CD4-positive, alpha-beta memory T cell (primary cell): ENCODE measurements at regions of chr9 and their contacts with region 1.

Region 1: GRCh38 chr9:4315582-4316215 is 15.8 kb upstream of the GLIS3 start:
- DNase-seq: peak; percentile 54 to 57 (median 56)
- H3K4me3 ChIP-seq: no peak overlapping the region
- H3K4me3 Mint-ChIP-seq: no peak overlapping the region
- H3K27ac ChIP-seq: no peak overlapping the region
- H3K27ac Mint-ChIP-seq: no peak overlapping the region
- H3K4me1 ChIP-seq: no peaks in the 10 kb centered on the region
- H3K4me1 Mint-ChIP-seq: no peaks in the 10 kb centered on the region
- H3K27me3 ChIP-seq: no peaks in the 10 kb centered on the region
- H3K27me3 Mint-ChIP-seq: peaks cover 3 to 6% of the 10 kb centered on the region in 2 donors

Region 2: GRCh38 chr9:4297151-4297785 is 18.4 kb before region 1 on chr9:
- CTCF ChIA-PET with region 1: interaction called, 3 read pairs
- POLR2A ChIA-PET with region 1: no interaction called
- intact Hi-C with region 1: loop called (anchors 1 kb)
- DNase-seq: peak in 4 of 5 donors; percentile 11 to 52 (median 22)
- H3K4me3 ChIP-seq: peak overlapping the region; percentile 34 to 72
- H3K4me3 Mint-ChIP-seq: peak overlapping the region; percentile 93 to 99 (median 95)
- H3K27ac ChIP-seq: no peak overlapping the region
- H3K27ac Mint-ChIP-seq: peak overlapping the region; percentile 48 to 90 (median 61)
- H3K4me1 ChIP-seq: peaks cover 16% of the 10 kb centered on the region
- H3K4me1 Mint-ChIP-seq: peaks cover 4 to 32% (median 19%) of the 10 kb centered on the region in 4 donors
- H3K27me3 ChIP-seq: no peaks in the 10 kb centered on the region
- H3K27me3 Mint-ChIP-seq: peaks cover 15 to 36% of the 10 kb centered on the region in 2 donors

Region 3: GRCh38 chr9:4366591-4367330 is 51.1 kb after region 1 on chr9:
- CTCF ChIA-PET with region 1: interaction called, 30 read pairs
- POLR2A ChIA-PET with region 1: no interaction called
- intact Hi-C with region 1: loop called (anchors 1 kb)
- DNase-seq: peak in 3 of 5 donors; percentile 13 to 27 (median 21)
- H3K4me3 ChIP-seq: no peak overlapping the region
- H3K4me3 Mint-ChIP-seq: no peak overlapping the region
- H3K27ac ChIP-seq: no peak overlapping the region
- H3K27ac Mint-ChIP-seq: no peak overlapping the region
- H3K4me1 ChIP-seq: no peaks in the 10 kb centered on the region
- H3K4me1 Mint-ChIP-seq: no peaks in the 10 kb centered on the region
- H3K27me3 ChIP-seq: no peaks in the 10 kb centered on the region
- H3K27me3 Mint-ChIP-seq: peaks cover 1 to 4% of the 10 kb centered on the region in 2 donors

Region 4: DNA sequence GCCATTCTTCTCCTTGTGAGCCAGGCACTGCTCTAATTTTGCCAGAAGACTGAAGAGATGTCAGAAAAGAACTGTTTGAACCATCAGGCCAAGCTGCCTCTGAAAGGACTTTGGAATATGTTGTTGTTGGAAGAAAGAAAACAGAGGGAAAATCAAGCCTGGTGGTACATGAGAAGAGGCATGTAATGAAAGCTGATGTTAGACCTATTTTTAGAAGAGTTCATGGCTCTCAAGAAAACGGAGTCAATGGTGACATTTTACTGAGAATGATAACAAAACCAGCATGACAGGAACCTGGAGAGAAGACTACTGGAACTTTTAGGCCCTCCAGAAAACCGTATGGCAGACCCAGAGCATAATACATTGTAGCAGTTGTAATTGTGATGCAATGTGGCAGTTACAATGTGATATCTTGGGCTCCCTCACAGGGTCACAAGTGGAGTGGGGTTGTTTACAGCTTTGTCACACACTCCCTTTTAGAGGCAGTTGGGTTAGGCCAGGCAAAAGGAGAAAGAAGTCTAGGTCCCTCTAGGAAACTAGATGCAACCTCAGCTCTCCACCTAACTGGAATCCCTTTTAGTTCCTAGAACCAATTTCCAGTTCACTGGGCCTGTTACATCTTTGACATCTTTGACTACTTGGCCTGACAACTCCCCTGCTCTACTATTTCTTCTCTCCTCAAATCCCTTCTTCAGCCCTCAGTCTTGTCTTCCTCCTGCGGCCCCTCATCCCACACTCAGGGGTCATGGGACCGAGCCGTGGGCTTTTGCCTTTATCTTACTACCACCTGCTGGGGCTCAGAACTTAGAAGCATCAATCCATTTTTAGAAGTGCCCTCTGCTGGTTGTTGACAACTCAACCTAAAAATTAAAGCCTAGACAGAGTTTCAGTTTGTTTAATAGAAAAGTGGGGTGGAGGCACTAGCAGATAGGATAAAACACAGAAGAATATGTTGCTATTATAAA is 608.2 kb after region 1 on chr9:
- CTCF ChIA-PET with region 1: no interaction called
- POLR2A ChIA-PET with region 1: no interaction called
- intact Hi-C with region 1: loop called (anchors 5 kb)
- DNase-seq: peak in 4 of 5 donors; percentile 28 to 41 (median 28)
- H3K4me3 ChIP-seq: no peak overlapping the region
- H3K4me3 Mint-ChIP-seq: no peak overlapping the region
- H3K27ac ChIP-seq: no peak overlapping the region
- H3K27ac Mint-ChIP-seq: peak overlapping the region in 1 of 7 donors; percentile 2
- H3K4me1 ChIP-seq: no peaks in the 10 kb centered on the region
- H3K4me1 Mint-ChIP-seq: peaks cover 0 to 6% (median 3%) of the 10 kb centered on the region in 4 donors
- H3K27me3 ChIP-seq: no peaks in the 10 kb centered on the region
- H3K27me3 Mint-ChIP-seq: no peaks in the 10 kb centered on the region